CD8-positive, alpha-beta memory T cell (primary cell): ENCODE measurements at regions of chr2 and their contacts with region 1.

Region 1: GRCh38 chr2:97697252-97698235 is 15.8 kb upstream of the ZAP70 start:
- DNase-seq: peak; percentile 78 to 93 (median 86)
- H3K4me3 ChIP-seq: no peak overlapping the region
- H3K4me3 Mint-ChIP-seq: peak overlapping the region in 1 of 7 donors; percentile 15
- H3K27ac ChIP-seq: no peak overlapping the region
- H3K27ac Mint-ChIP-seq: peak overlapping the region in 4 of 8 donors; percentile 34 to 91 (median 70)
- H3K4me1 ChIP-seq: peaks cover 4% of the 10 kb centered on the region
- H3K4me1 Mint-ChIP-seq: peaks cover 6 to 11% (median 6%) of the 10 kb centered on the region in 3 donors
- H3K27me3 ChIP-seq: no peaks in the 10 kb centered on the region
- H3K27me3 Mint-ChIP-seq: peaks cover 0 to 6% of the 10 kb centered on the region in 2 donors

Region 2: GRCh38 chr2:97617911-97618310 is 79.6 kb before region 1 on chr2:
- CTCF ChIA-PET with region 1: no interaction called
- POLR2A ChIA-PET with region 1: no interaction called
- DNase-seq: no peak
- H3K4me3 ChIP-seq: no peak overlapping the region
- H3K4me3 Mint-ChIP-seq: no peak overlapping the region
- H3K27ac ChIP-seq: no peak overlapping the region
- H3K27ac Mint-ChIP-seq: no peak overlapping the region
- H3K4me1 ChIP-seq: no peaks in the 10 kb centered on the region
- H3K4me1 Mint-ChIP-seq: no peaks in the 10 kb centered on the region
- H3K27me3 ChIP-seq: no peaks in the 10 kb centered on the region
- H3K27me3 Mint-ChIP-seq: peaks cover 0 to 2% of the 10 kb centered on the region in 2 donors

Region 3: GRCh38 chr2:97663965-97664635 is 33.4 kb before region 1 on chr2 and contains the start of gene ACTR1B:
- CTCF ChIA-PET with region 1: interaction called, 66 read pairs
- POLR2A ChIA-PET with region 1: interaction called, 8 read pairs
- DNase-seq: peak; percentile 97 to 99 (median 98)
- H3K4me3 ChIP-seq: peak within 1 kb of the TSS; percentile 100
- H3K4me3 Mint-ChIP-seq: peak within 1 kb of the TSS; percentile 92 to 99 (median 97)
- H3K27ac ChIP-seq: peak within 1 kb of the TSS; percentile 96
- H3K27ac Mint-ChIP-seq: peak within 1 kb of the TSS; percentile 98 to 100 (median 99)
- H3K4me1 ChIP-seq: peaks cover 30% of the 10 kb centered on the region
- H3K4me1 Mint-ChIP-seq: peaks cover 30 to 43% (median 31%) of the 10 kb centered on the region in 3 donors
- H3K27me3 ChIP-seq: no peaks in the 10 kb centered on the region
- H3K27me3 Mint-ChIP-seq: no peaks in the 10 kb centered on the region
- total RNA-seq, gene ACTR1B: 76.6 to 80.6 TPM

Region 4: GRCh38 chr2:97718051-97718882 is 20.7 kb after region 1 on chr2:
- CTCF ChIA-PET with region 1: interaction called, 43 read pairs
- POLR2A ChIA-PET with region 1: interaction called, 3 read pairs
- DNase-seq: peak; percentile 68 to 88 (median 78)
- H3K4me3 ChIP-seq: peak overlapping the region; percentile 91
- H3K4me3 Mint-ChIP-seq: peak overlapping the region; percentile 89 to 99 (median 93)
- H3K27ac ChIP-seq: peak overlapping the region; percentile 58
- H3K27ac Mint-ChIP-seq: peak overlapping the region; percentile 86 to 100 (median 98)
- H3K4me1 ChIP-seq: peaks cover 81% of the 10 kb centered on the region
- H3K4me1 Mint-ChIP-seq: peaks cover 79 to 93% (median 81%) of the 10 kb centered on the region in 3 donors
- H3K27me3 ChIP-seq: no peaks in the 10 kb centered on the region
- H3K27me3 Mint-ChIP-seq: peaks cover 0 to 4% of the 10 kb centered on the region in 2 donors

Region 5: DNA sequence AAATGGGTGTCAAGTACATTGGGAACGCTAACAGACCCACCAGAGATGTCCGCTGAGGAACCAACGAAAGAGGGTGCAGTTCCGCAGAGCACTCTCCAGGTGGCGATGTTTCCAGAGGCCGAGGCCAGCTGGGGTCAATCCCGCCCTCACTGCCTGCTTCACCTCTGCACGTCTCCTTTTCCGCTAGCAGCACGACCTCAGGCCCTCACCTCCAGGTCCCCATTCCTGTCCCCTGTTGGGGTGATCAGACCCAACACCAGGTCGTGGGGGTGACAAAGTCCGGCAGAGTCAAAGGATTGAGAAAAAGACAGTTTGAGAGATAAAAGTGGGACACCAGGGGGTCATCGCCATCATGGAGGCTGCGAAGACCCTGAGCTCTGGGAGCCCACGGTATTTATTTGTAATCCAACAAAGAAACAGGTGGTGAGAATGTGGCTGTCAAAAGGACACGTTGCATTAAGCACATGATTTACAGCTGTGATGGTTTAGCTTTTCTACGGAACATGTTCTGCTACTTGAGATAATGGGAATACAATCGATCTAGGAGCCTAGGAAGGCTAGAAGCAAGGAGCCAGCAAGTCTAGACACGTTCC is 43.1 kb after region 1 on chr2:
- CTCF ChIA-PET with region 1: interaction called, 100 read pairs
- POLR2A ChIA-PET with region 1: interaction called, 3 read pairs
- DNase-seq: peak in 3 of 5 donors; percentile 28 to 56 (median 35)
- H3K4me3 ChIP-seq: no peak overlapping the region
- H3K4me3 Mint-ChIP-seq: peak overlapping the region in 3 of 7 donors; percentile 29 to 63 (median 62)
- H3K27ac ChIP-seq: peak overlapping the region; percentile 32
- H3K27ac Mint-ChIP-seq: peak overlapping the region; percentile 71 to 92 (median 82)
- H3K4me1 ChIP-seq: peaks cover 48% of the 10 kb centered on the region
- H3K4me1 Mint-ChIP-seq: peaks cover 62 to 76% (median 70%) of the 10 kb centered on the region in 3 donors
- H3K27me3 ChIP-seq: no peaks in the 10 kb centered on the region
- H3K27me3 Mint-ChIP-seq: peaks cover 0 to 3% of the 10 kb centered on the region in 2 donors

Region 6: GRCh38 chr2:97812931-97813330 is 115.4 kb after region 1 on chr2:
- CTCF ChIA-PET with region 1: no interaction called
- POLR2A ChIA-PET with region 1: no interaction called
- DNase-seq: no peak
- H3K4me3 ChIP-seq: no peak overlapping the region
- H3K4me3 Mint-ChIP-seq: no peak overlapping the region
- H3K27ac ChIP-seq: no peak overlapping the region
- H3K27ac Mint-ChIP-seq: no peak overlapping the region
- H3K4me1 ChIP-seq: no peaks in the 10 kb centered on the region
- H3K4me1 Mint-ChIP-seq: no peaks in the 10 kb centered on the region
- H3K27me3 ChIP-seq: no peaks in the 10 kb centered on the region
- H3K27me3 Mint-ChIP-seq: no peaks in the 10 kb centered on the region